ENCODE measurements at regions of chrX and their contacts with region 1.

Region 1: DNA sequence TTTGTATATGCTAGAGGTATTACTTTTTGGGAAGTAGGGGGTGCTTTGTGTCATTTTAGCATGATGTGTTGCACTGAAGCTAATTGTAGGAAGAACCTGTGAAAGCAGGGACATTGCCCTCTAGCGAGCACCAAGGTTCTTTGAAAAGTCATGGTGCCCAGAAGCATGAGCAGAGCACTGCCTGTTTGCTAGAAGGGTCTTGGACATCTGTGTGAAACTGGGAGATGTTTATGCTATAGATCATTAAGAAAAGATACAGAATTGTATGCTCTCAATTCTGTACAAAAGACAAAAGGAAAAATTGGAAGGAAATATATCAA is 14.7 kb downstream of the GRPR start:
- DNase-seq: no peak
- ATAC-seq: no peak
- H3K4me3 Mint-ChIP-seq: no peak overlapping the region
- H3K27ac Mint-ChIP-seq: no peak overlapping the region
- H3K4me1 Mint-ChIP-seq: peaks cover 3% of the 10 kb centered on the region
- H3K27me3 Mint-ChIP-seq: peaks cover 7% of the 10 kb centered on the region

Region 2: GRCh38 chrX:15761564-15762191 is 376.4 kb before region 1 on chrX:
- CTCF ChIA-PET with region 1: no interaction called
- POLR2A ChIA-PET with region 1: no interaction called
- intact Hi-C with region 1: loop called in 1 of 2 experiments (anchors 10 kb)
- DNase-seq: peak; percentile 49
- ATAC-seq: peak; percentile 80
- H3K4me3 Mint-ChIP-seq: no peak overlapping the region
- H3K27ac Mint-ChIP-seq: peak overlapping the region; percentile 70
- H3K4me1 Mint-ChIP-seq: peaks cover 38% of the 10 kb centered on the region
- H3K27me3 Mint-ChIP-seq: no peaks in the 10 kb centered on the region

Region 3: DNA sequence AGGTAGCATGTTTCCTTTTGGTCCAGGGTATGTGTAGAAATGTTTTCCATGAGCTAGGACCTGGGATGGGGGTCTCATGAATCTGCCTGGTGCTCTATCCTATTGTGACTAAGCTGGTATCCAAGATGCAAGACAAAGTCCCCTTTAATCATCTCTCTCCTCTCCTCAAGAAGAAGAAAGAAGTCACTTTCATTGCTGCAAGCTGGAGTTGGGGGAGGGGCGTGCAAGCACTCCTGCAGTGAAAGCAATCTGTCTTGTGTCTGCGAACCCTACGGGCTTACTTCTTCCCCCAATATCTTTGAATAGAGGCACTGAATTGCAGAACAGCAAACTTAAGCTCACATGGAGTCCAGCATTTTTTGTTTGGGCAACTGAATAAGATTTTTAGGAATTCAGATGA is 41.9 kb before region 1 on chrX:
- CTCF ChIA-PET with region 1: no interaction called
- POLR2A ChIA-PET with region 1: no interaction called
- intact Hi-C with region 1: no loop called
- DNase-seq: no peak
- ATAC-seq: no peak
- H3K4me3 Mint-ChIP-seq: no peak overlapping the region
- H3K27ac Mint-ChIP-seq: no peak overlapping the region
- H3K4me1 Mint-ChIP-seq: no peaks in the 10 kb centered on the region
- H3K27me3 Mint-ChIP-seq: peaks cover 8% of the 10 kb centered on the region

Region 4: GRCh38 chrX:16123222-16123786 is 14.8 kb before region 1 on chrX and contains the start of gene GRPR:
- CTCF ChIA-PET with region 1: interaction called, 10 read pairs
- POLR2A ChIA-PET with region 1: no interaction called
- intact Hi-C with region 1: no loop called
- DNase-seq: peak; percentile 75
- ATAC-seq: peak; percentile 77
- H3K4me3 Mint-ChIP-seq: no peak within 1 kb of the TSS
- H3K27ac Mint-ChIP-seq: no peak within 1 kb of the TSS
- H3K4me1 Mint-ChIP-seq: peaks cover 22% of the 10 kb centered on the region
- H3K27me3 Mint-ChIP-seq: peaks cover 12% of the 10 kb centered on the region
- total RNA-seq, gene GRPR: not detected